ENCODE measurements at regions of chr11 and their contacts with region 1.

Region 1: GRCh38 chr11:65540297-65541092 is 15.6 kb downstream of the SCYL1 start:
- DNase-seq: peak; percentile 79 to 99 (median 86)
- ATAC-seq: peak; percentile 77 to 84
- H3K4me3 Mint-ChIP-seq: peak overlapping the region; percentile 77 to 90 (median 85)
- H3K27ac Mint-ChIP-seq: peak overlapping the region; percentile 80 to 96 (median 86)
- H3K4me1 Mint-ChIP-seq: peaks cover 15 to 41% (median 31%) of the 10 kb centered on the region in 4 donors
- H3K27me3 Mint-ChIP-seq: no peaks in the 10 kb centered on the region

Region 2: GRCh38 chr11:65454696-65455456 is 85.6 kb before region 1 on chr11:
- POLR2A ChIA-PET with region 1: no interaction called
- DNase-seq: peak; percentile 44 to 85 (median 70)
- ATAC-seq: peak; percentile 87 to 91
- H3K4me3 Mint-ChIP-seq: peak overlapping the region; percentile 81 to 96 (median 90)
- H3K27ac Mint-ChIP-seq: peak overlapping the region; percentile 57 to 95 (median 91)
- H3K4me1 Mint-ChIP-seq: peaks cover 3 to 35% (median 20%) of the 10 kb centered on the region in 4 donors
- H3K27me3 Mint-ChIP-seq: no peaks in the 10 kb centered on the region

Region 3: GRCh38 chr11:65530157-65530496 is 10.4 kb before region 1 on chr11:
- POLR2A ChIA-PET with region 1: interaction called, 69 read pairs
- DNase-seq: peak in 5 of 10 donors; percentile 40 to 57 (median 51)
- ATAC-seq: peak; percentile 80 to 97
- H3K4me3 Mint-ChIP-seq: peak overlapping the region in 7 of 10 donors; percentile 15 to 48 (median 33)
- H3K27ac Mint-ChIP-seq: peak overlapping the region; percentile 51 to 92 (median 77)
- H3K4me1 Mint-ChIP-seq: peaks cover 23 to 47% (median 40%) of the 10 kb centered on the region in 4 donors
- H3K27me3 Mint-ChIP-seq: no peaks in the 10 kb centered on the region

Region 4: DNA sequence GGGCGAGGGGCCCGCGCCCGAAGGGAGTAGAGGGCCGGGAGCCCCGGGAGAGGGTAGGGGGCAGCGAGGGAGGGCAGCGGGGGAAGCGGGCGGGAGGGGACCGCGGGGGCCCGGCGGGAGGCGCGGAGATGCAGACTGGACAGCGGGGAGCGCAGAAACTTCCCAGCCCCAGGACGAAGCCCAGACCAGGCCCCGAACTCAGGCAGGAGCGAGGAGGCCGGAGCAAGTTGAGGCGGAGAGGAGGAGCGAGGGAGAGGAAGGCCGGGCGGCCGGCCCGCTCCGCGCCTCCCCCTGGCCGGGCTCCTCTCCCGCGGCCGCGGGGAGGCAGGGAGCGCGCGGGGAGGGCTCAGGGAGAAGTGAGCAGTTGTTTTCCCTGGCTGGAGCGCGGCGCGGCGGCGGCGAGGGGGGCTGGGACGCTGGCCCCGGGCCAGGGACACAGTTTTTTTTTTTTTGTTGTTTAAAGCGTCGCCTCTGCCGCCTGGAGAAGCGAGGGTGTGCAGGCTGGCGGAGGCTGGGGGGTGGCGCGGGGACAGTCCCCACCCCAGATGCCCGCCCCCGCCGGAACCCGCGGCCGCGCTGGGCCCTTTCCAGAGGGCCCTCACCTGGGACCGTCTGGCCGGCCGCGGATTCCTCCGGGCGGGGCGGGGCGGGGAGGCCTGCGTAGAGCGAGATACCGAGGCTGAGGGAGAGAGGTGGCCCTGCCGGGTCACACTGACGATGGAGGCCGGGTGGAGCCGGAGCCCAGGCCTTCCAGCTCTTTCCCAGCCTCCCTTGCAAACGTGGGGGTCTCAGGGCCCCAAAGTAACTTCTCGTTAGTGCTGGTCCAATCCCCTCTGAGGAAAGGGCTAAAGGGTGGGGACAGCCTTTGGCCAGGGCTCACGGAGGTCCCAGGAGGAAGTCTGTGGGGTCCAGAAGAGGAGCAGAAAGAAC is 17.8 kb after region 1 on chr11 and contains the start of gene LTBP3:
- POLR2A ChIA-PET with region 1: interaction called, 149 read pairs
- DNase-seq: peak in 6 of 10 donors; percentile 45 to 54 (median 50)
- ATAC-seq: peak; percentile 46 to 56
- H3K4me3 Mint-ChIP-seq: peak within 1 kb of the TSS; percentile 82 to 95 (median 91)
- H3K27ac Mint-ChIP-seq: peak within 1 kb of the TSS; percentile 88 to 98 (median 94)
- H3K4me1 Mint-ChIP-seq: peaks cover 37 to 66% (median 60%) of the 10 kb centered on the region in 4 donors
- H3K27me3 Mint-ChIP-seq: no peaks in the 10 kb centered on the region
- polyA plus RNA-seq, gene LTBP3: 7.3 to 35.0 (median 18.9) TPM

Region 5: DNA sequence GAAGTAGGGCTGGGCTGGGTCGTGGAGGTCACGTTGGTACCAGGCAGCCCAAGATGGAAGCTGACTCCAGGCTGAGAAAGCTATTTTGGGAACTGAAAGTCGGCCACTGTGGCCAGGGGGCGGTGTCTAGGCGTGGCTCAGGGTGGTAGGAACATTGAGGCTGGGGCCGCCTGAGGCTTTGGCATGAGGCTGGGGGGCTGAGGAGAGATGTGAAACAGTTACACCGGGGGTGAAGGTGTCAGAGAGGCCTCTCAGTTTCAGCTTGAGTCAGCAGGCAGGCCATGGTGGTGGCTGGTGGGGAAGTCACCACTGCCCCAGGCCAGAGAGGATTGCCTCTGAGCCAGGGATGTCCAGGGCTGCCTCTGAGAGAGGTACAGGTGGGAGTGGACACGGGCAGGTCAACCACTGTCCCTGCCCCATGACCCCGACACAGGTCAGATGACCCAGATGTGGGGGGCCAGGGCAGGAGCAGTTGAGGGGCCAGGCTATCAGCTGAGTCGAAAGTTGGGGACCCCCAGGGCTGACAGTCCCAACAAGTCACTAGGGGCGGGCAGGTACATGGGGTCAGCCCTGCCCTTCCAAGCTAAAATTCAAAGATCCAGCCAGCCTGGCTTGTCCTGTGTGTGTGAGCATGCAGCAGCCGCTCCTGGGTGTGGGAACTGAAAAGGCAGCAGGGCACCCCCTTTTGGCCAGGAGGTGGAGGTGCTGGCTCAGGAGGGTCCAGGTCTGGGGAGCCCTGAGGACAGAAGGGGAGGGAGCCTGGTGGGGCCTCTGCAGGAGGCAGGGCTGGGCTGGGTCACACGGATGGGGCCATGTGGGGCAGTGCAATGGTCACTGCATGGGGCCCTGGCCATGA is 47.9 kb after region 1 on chr11:
- POLR2A ChIA-PET with region 1: interaction called, 67 read pairs
- DNase-seq: peak; percentile 57 to 88 (median 75)
- ATAC-seq: peak; percentile 94
- H3K4me3 Mint-ChIP-seq: peak overlapping the region in 2 of 10 donors; percentile 11 to 67
- H3K27ac Mint-ChIP-seq: peak overlapping the region; percentile 53 to 86 (median 74)
- H3K4me1 Mint-ChIP-seq: peaks cover 14 to 35% (median 35%) of the 10 kb centered on the region in 4 donors
- H3K27me3 Mint-ChIP-seq: no peaks in the 10 kb centered on the region

Region 6: DNA sequence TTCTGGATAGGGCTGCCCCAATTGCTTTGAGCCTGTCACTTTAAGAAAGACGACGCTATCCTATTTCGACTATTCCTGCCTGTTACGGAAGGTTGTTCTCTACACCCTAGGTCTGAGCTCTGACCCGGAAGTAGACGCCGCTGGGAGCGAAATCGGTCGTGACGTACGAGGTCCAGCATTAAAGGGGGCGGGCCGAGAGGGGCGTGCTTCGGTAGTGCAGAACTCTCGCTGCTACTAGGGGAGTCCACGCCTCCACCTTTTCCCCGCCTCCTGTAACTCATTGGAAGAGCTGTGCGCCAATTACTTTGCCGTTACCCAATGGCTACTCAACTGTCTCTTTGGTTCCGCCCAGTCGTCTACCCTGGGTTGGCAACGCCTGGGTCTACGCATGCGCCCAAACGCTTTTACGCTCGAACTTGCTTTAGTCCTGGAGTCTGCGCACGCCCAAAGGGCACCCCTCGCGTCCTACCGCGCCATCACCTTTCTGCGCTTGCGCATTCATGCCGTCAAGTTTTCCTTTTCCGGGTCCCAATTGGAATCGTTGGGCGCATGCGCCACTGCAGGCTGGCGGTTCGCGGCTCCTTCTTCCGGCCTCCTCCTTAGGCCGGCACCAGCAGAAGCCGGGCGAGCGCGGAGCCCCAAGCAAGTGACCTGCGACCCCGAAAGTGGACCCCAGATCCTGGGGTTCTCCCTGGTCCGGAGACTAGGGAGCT is 74.9 kb after region 1 on chr11 and contains the start of gene PCNX3:
- POLR2A ChIA-PET with region 1: interaction called, 14 read pairs
- DNase-seq: peak; percentile 97 to 100 (median 100)
- ATAC-seq: peak; percentile 86 to 89
- H3K4me3 Mint-ChIP-seq: peak within 1 kb of the TSS; percentile 94 to 99 (median 96)
- H3K27ac Mint-ChIP-seq: peak within 1 kb of the TSS; percentile 94 to 99 (median 97)
- H3K4me1 Mint-ChIP-seq: peaks cover 22 to 55% (median 52%) of the 10 kb centered on the region in 4 donors
- H3K27me3 Mint-ChIP-seq: peaks cover 0 to 2% (median 0%) of the 10 kb centered on the region in 5 donors
- polyA plus RNA-seq, gene PCNX3: 0.96 to 6.5 (median 2.2) TPM